ENCODE measurements at regions of chr6 and their contacts with region 1.

Region 1: DNA sequence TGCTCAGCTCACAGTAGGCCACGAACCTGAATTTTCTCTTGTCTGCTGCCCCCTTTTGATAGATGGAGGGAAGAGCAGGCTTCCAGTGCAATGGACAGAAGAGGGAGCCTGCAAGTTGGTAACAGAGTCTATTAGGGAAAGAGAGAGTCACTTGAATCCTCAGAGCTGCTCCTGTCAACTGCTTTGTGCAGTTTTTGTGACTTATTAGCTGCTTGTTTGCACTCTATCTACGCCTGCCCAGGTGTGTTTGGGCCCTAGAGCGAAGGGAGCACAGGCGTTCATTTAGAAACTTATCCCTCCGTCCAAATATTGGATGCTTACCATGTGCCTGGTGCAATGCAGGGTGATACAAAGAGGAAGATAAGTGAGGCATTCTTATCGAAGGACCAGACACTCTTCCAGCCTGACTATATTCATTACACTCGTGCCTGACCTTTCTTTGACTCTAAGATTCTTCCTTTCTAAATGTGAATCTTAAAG is 11.6 kb upstream of the SLC2A12 start:
- DNase-seq: no peak
- ATAC-seq: peak; percentile 97
- H3K4me3 ChIP-seq: no peak overlapping the region
- H3K27ac ChIP-seq: no peak overlapping the region
- H3K4me1 ChIP-seq: no peaks in the 10 kb centered on the region
- H3K27me3 ChIP-seq: no peaks in the 10 kb centered on the region
- CTCF ChIP-seq: peak; percentile 86 to 94 (median 88)
- EP300 ChIP-seq: no peak
- POLR2A ChIP-seq: no peak
- RAD21 ChIP-seq: peak; percentile 80

Region 2: GRCh38 chr6:133916650-133917151 is 147.3 kb before region 1 on chr6:
- CTCF ChIA-PET with region 1: interaction called, 216 read pairs
- POLR2A ChIA-PET with region 1: no interaction called
- RAD21 ChIA-PET with region 1: interaction called, 9 read pairs
- SMC1A ChIA-PET with region 1: interaction called, 61 read pairs
- in situ Hi-C with region 1: loop called (anchors 10 kb)
- intact Hi-C with region 1: no loop called
- DNase-seq: peak; percentile 35
- ATAC-seq: peak; percentile 88
- H3K4me3 ChIP-seq: no peak overlapping the region
- H3K27ac ChIP-seq: no peak overlapping the region
- H3K4me1 ChIP-seq: no peaks in the 10 kb centered on the region
- H3K27me3 ChIP-seq: no peaks in the 10 kb centered on the region
- CTCF ChIP-seq: peak; percentile 85 to 89 (median 88)
- EP300 ChIP-seq: no peak
- POLR2A ChIP-seq: no peak
- RAD21 ChIP-seq: peak; percentile 87

Region 3: DNA sequence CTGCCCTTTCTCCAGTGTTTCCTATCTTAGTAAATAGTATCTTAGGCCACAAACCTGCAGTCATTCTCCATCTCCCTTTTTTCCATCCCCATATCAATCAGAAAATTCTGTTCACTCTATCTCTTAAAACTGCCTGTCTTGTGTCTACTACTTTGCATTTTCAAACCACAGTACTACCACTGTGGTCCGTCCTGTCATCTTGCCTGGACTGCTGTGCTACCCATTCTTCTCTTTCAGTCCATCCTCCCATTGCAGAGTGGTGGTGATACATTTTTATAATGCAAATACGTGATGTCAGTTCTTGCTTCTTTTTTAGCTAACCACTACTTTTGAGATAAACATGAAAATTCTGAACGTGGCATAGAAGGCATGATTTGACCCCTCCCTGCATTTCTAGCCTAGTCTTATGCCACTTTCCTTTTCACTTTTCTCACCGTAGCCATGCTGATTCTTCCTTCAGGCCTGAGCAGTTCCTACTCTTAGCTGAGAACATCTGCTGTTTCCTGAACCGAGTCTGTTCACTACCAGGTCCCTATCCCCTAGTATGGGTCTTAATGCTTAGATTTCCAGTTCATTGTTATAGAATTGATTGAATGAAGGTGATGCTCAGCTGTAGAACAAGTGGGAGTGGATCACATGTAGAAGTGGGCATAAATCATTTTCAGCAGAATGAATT is 97.2 kb before region 1 on chr6:
- CTCF ChIA-PET with region 1: interaction called, 14 read pairs
- POLR2A ChIA-PET with region 1: no interaction called
- RAD21 ChIA-PET with region 1: interaction called, 6 read pairs
- SMC1A ChIA-PET with region 1: interaction called, 6 read pairs
- in situ Hi-C with region 1: loop called (anchors 5 kb)
- intact Hi-C with region 1: no loop called
- DNase-seq: peak; percentile 34
- ATAC-seq: peak; percentile 85
- H3K4me3 ChIP-seq: peak overlapping the region; percentile 4; the same call in 1 of the 2 replicates
- H3K27ac ChIP-seq: peak overlapping the region; percentile 30
- H3K4me1 ChIP-seq: peaks cover 14% of the 10 kb centered on the region; the same call in 1 of the 2 replicates
- H3K27me3 ChIP-seq: no peaks in the 10 kb centered on the region
- CTCF ChIP-seq: no peak
- EP300 ChIP-seq: no peak
- POLR2A ChIP-seq: no peak
- RAD21 ChIP-seq: no peak

Region 4: DNA sequence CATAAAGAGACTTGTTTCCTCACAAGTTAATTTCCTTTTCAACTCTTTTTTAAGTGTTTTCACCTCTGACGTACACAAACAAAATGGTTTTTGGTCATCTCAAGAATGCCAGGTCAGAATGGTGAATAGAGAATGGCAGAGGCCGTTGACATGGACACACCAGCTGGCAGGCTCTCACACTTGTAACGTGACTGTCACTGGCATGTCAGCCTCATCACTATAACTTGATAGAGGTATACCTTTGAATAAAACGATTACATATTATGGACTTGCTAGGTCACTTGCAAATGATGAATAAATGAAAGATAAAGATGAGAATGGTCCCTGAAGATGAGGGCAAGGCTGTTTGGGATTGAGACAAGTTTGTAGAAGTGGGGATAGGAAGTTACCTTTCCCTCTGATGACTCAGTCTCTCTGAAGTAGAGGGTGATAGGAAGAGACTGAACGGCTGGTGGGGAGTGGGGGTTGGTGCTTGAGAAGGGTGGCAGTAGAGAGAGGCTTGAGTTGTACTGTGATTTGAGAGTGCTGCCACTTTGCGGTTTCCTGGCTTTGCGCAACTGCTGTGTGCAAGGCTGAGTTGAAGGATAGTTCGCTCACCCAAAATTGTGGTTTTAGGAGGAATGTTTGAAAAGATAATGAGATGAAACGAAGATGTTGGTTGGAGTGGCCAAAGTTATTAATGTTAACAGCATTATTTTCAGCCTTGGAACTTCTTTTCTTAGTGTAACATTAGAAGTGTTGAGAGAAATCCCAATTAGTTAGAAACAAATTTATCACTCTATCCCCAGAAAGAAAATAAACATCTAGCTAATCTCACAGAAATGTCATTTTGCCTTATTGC is 80.7 kb before region 1 on chr6:
- CTCF ChIA-PET with region 1: interaction called, 7 read pairs
- POLR2A ChIA-PET with region 1: no interaction called
- RAD21 ChIA-PET with region 1: interaction called, 5 read pairs
- SMC1A ChIA-PET with region 1: interaction called, 11 read pairs
- in situ Hi-C with region 1: no loop called
- intact Hi-C with region 1: no loop called
- DNase-seq: no peak
- ATAC-seq: no peak
- H3K4me3 ChIP-seq: no peak overlapping the region
- H3K27ac ChIP-seq: no peak overlapping the region
- H3K4me1 ChIP-seq: no peaks in the 10 kb centered on the region
- H3K27me3 ChIP-seq: no peaks in the 10 kb centered on the region
- CTCF ChIP-seq: no peak
- EP300 ChIP-seq: no peak
- POLR2A ChIP-seq: no peak
- RAD21 ChIP-seq: no peak

Region 5: GRCh38 chr6:134074151-134075055 is 10.4 kb after region 1 on chr6:
- CTCF ChIA-PET with region 1: interaction called, 22 read pairs
- POLR2A ChIA-PET with region 1: no interaction called
- RAD21 ChIA-PET with region 1: no interaction called
- SMC1A ChIA-PET with region 1: interaction called, 3 read pairs
- in situ Hi-C with region 1: no loop called
- intact Hi-C with region 1: no loop called
- DNase-seq: no peak
- ATAC-seq: no peak
- H3K4me3 ChIP-seq: no peak overlapping the region
- H3K27ac ChIP-seq: no peak overlapping the region
- H3K4me1 ChIP-seq: no peaks in the 10 kb centered on the region
- H3K27me3 ChIP-seq: no peaks in the 10 kb centered on the region
- CTCF ChIP-seq: no peak
- EP300 ChIP-seq: no peak
- POLR2A ChIP-seq: no peak
- RAD21 ChIP-seq: no peak

Region 6: GRCh38 chr6:134363318-134364039 is 299.5 kb after region 1 on chr6:
- CTCF ChIA-PET with region 1: no interaction called
- POLR2A ChIA-PET with region 1: no interaction called
- RAD21 ChIA-PET with region 1: no interaction called
- SMC1A ChIA-PET with region 1: no interaction called
- in situ Hi-C with region 1: no loop called
- intact Hi-C with region 1: no loop called
- DNase-seq: no peak
- ATAC-seq: no peak
- H3K4me3 ChIP-seq: no peak overlapping the region
- H3K27ac ChIP-seq: no peak overlapping the region
- H3K4me1 ChIP-seq: no peaks in the 10 kb centered on the region
- H3K27me3 ChIP-seq: no peaks in the 10 kb centered on the region
- CTCF ChIP-seq: no peak
- EP300 ChIP-seq: no peak
- POLR2A ChIP-seq: no peak
- RAD21 ChIP-seq: no peak

Measured in GM12878 (cell line).